ENCODE measurements at regions of chr9 and their contacts with region 1.

Region 1: DNA sequence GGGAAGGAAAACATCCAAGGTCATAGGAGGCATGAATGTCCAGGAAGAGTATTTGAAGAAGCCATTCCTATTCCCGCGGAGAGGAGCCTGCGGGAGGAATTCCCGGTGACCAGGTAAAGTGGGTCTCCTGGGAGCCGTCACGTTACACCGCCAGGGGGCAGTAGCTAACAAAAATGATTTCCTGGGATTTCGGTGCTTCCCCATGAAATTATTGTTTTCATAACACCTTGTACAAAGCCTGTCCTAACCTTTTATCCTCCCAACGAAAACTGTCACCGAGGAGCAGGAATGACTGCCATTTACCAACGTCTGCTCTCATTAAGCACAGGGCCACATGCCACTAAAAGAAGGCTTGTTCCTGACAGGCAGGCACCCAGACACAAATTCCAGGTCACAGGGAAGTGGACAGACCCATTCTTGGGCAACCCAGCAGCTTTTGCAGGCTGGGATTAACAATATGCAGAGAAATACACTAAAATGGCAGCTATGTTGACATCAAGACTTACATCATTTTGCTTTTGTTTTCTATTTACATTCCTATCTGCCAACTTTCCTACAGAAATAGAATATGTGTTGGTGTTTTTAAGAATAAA is 41.2 kb upstream of the CTSL start:
- DNase-seq: no peak
- ATAC-seq: peak in 1 of 4 donors; percentile 44
- H3K4me3 ChIP-seq: no peak overlapping the region
- H3K27ac ChIP-seq: peak overlapping the region in 3 of 12 donors; percentile 13 to 88 (median 13)
- H3K4me1 ChIP-seq: peaks cover 0 to 23% (median 0%) of the 10 kb centered on the region in 12 donors
- H3K27me3 ChIP-seq: no peaks in the 10 kb centered on the region
- CTCF ChIP-seq: peak; percentile 62 to 88 (median 73)
- POLR2A ChIP-seq: no peak

Region 2: DNA sequence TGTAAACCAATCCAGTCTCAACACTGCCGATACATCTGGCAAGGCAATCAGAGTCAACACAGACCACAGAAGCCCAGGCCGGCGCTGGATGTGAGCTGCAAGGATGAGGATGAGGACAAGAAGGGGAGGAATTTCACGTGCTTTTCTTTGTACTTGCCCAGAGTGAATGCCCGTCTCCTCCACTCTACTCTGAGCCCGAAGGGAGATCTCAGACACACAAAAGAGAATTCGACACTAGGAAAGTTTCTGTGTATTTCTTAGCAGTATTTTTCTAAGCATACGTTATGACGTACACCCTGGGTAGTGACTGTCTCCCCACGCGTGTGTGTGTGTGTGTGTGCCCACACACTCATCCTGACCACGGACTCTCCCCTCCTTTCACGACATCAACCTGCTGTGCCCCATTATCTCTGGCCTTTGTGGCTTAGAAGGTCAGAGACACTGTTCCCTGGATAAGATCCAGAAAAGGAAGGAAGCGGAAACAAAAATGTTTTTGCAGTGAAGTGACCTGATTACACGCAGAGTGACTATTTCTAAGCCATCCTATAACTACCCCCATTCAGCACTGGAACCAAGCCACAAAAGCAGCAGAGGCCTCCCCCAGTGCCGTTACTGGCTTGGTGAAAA is 414.4 kb before region 1 on chr9:
- intact Hi-C with region 1: no loop called
- DNase-seq: peak in 3 of 5 donors; percentile 35 to 64 (median 63)
- ATAC-seq: peak; percentile 33 to 59 (median 50)
- H3K4me3 ChIP-seq: peak overlapping the region in 1 of 12 donors; percentile 5
- H3K27ac ChIP-seq: peak overlapping the region in 7 of 12 donors; percentile 1 to 63 (median 27)
- H3K4me1 ChIP-seq: peaks cover 0 to 28% (median 17%) of the 10 kb centered on the region in 12 donors
- H3K27me3 ChIP-seq: no peaks in the 10 kb centered on the region
- CTCF ChIP-seq: no peak
- POLR2A ChIP-seq: no peak

Region 3: DNA sequence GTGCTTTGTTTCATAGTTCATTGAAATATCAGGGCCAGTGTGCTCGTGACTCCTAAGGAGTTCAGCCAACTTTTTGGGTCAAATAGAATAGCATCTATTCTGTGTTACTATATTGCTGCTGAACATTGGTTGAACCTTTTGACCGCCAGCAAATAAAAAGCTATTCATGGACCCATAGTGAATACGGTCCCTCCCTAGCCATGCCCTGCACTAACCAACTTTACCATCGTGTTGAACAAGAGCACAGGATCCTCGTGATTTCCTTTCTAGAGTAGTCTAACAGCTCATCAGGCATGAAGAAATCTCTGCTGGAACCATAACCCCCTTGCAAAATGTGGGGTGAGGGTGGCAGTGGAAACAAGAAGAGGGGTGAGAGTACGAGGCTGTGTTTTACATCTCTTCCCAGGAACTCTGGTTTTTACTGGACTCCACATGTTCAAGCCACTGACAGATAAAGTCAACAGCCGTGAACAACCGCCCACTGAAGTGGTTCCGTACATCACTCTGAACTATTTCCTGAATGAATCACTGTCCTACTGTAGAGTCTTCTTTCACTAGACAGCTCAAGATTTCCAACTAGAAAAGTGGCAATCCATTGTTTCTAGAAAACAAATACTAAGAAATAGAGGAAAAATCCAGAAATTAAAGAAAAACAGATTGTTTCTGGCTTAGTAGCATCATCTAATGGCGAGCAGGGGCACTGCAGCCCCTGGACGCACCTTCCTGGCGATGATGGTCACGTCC is 127.8 kb after region 1 on chr9:
- intact Hi-C with region 1: loop called (anchors 1 to 5 kb)
- DNase-seq: no peak
- ATAC-seq: peak in 3 of 4 donors; percentile 46 to 62 (median 56)
- H3K4me3 ChIP-seq: no peak overlapping the region
- H3K27ac ChIP-seq: no peak overlapping the region
- H3K4me1 ChIP-seq: peaks cover 0 to 16% (median 0%) of the 10 kb centered on the region in 12 donors
- H3K27me3 ChIP-seq: peaks cover 0 to 23% (median 0%) of the 10 kb centered on the region in 9 donors
- CTCF ChIP-seq: peak; percentile 78 to 94 (median 90)
- POLR2A ChIP-seq: no peak

Region 4: GRCh38 chr9:88041447-88041846 is 356.7 kb after region 1 on chr9:
- intact Hi-C with region 1: loop called (anchors 2 to 10 kb)
- DNase-seq: no peak
- ATAC-seq: no peak
- H3K4me3 ChIP-seq: no peak overlapping the region
- H3K27ac ChIP-seq: no peak overlapping the region
- H3K4me1 ChIP-seq: no peaks in the 10 kb centered on the region
- H3K27me3 ChIP-seq: no peaks in the 10 kb centered on the region
- CTCF ChIP-seq: peak in 8 of 12 donors; percentile 12 to 47 (median 32)
- POLR2A ChIP-seq: no peak

Region 5: DNA sequence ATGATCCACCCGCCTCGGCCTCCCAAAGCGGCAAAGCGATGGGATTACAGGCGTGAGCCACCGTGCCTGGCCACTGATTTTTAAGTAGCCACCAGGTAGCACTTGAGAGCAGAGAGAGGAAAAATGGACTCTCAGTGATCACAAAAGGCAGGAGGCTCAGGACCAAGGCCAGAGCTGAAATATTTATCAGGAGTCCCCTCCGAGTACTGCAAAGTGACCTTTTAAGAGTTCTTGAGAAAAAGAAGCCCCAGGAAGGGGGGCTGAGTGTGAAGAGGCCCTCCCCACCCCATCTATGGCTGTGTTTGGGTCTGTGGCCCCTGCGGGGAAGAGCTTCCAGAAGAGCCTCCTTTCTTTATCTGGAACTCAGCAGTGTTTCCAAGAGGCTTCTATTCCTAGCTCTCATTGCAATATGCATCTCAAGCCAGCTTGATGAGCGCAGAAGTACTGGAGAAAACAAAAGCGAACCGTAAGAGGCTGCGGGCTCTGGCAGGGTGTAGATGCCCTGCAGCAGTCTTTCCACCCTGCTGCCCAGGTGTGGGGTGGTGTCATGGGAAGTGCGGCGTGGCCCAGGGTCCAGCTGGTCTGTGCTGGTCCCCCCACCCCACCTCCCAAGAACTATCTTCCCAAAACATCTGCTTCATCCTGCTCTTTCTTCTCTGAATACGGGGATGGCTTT is 365.1 kb after region 1 on chr9:
- intact Hi-C with region 1: loop called in 4 of 10 experiments (anchors 5 to 10 kb)
- DNase-seq: no peak
- ATAC-seq: peak in 1 of 4 donors; percentile 46
- H3K4me3 ChIP-seq: no peak overlapping the region
- H3K27ac ChIP-seq: no peak overlapping the region
- H3K4me1 ChIP-seq: peaks cover 0 to 7% (median 0%) of the 10 kb centered on the region in 12 donors
- H3K27me3 ChIP-seq: no peaks in the 10 kb centered on the region
- CTCF ChIP-seq: no peak
- POLR2A ChIP-seq: no peak